Sigmoid colon (tissue), 7 donors: ENCODE measurements at regions of chr9 and their contacts with region 1.

Region 1: DNA sequence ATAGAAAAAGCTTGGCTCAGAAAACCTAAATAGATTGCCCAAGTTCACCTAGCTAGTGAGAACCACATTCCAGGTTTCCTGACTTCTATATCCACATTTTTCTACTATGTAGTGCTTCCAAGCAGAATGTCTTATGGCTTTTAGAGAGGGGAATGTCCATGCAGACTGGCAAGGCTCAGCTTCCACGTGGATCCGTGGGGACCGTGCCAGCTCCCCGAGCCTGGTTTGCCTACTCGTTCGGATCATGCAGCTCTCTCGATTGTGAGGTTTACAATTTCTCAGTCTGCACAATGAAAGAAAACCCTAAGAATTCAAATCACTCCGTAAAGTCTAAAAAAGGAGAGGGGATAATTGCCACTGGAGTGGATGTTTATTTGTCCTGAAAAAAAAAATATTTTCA is 256.5 kb upstream of the NR4A3 start:
- DNase-seq: no peak
- H3K4me3 ChIP-seq: no peak overlapping the region
- H3K27ac ChIP-seq: no peak overlapping the region
- H3K4me1 ChIP-seq: peaks cover 0 to 10% (median 2%) of the 10 kb centered on the region in 4 donors
- H3K27me3 ChIP-seq: no peaks in the 10 kb centered on the region
- CTCF ChIP-seq: no peak
- EP300 ChIP-seq: peak in 1 of 4 donors; percentile 19
- POLR2A ChIP-seq: no peak

Region 2: DNA sequence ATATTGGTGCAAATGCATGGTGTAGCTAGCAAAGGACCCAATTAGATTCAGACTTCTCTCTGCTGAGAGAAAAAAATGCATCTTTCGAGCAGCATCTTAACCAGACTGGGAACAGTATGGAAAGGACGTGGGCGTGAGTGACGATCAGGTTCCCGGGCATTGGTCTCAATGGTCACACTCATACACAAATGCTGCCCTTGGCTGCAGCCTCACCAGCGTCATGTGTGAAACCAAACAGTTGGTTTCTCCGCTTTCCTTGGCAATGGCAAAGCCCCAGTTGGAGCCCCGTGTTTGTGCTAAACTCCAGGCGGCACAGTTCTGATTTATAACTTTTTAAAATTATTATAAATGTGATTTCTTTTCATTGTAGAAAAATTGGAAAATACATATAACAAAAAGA is 105.3 kb before region 1 on chr9:
- intact Hi-C with region 1: loop called (anchors 5 kb)
- DNase-seq: no peak
- H3K4me3 ChIP-seq: no peak overlapping the region
- H3K27ac ChIP-seq: no peak overlapping the region
- H3K4me1 ChIP-seq: peaks cover 0 to 7% (median 5%) of the 10 kb centered on the region in 4 donors
- H3K27me3 ChIP-seq: no peaks in the 10 kb centered on the region
- CTCF ChIP-seq: no peak
- EP300 ChIP-seq: no peak
- POLR2A ChIP-seq: no peak

Region 3: DNA sequence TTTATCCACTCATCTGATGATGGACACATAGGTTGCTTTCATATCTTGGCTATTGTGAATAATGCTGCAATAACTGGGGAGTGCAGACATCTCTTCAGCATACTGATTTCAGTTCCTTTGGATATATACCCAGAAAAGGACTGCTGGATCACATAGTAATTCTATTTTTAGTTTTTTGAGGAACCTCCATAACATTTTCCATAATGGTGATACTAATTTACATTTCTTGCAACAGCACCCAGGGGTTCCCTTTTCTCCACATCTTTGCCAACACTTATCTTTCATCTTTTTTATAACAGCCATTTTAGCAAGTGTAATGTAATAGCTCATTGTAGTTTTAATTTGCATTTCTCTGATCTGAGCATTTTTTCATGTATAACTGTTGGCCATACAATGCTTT is 222.4 kb after region 1 on chr9:
- intact Hi-C with region 1: no loop called
- DNase-seq: no peak
- H3K4me3 ChIP-seq: no peak overlapping the region
- H3K27ac ChIP-seq: no peak overlapping the region
- H3K4me1 ChIP-seq: no peaks in the 10 kb centered on the region
- H3K27me3 ChIP-seq: no peaks in the 10 kb centered on the region
- CTCF ChIP-seq: no peak
- EP300 ChIP-seq: no peak
- POLR2A ChIP-seq: no peak